Mammary epithelial cell (primary cell): ENCODE measurements at regions of chr15 and their contacts with region 1.

Region 1: DNA sequence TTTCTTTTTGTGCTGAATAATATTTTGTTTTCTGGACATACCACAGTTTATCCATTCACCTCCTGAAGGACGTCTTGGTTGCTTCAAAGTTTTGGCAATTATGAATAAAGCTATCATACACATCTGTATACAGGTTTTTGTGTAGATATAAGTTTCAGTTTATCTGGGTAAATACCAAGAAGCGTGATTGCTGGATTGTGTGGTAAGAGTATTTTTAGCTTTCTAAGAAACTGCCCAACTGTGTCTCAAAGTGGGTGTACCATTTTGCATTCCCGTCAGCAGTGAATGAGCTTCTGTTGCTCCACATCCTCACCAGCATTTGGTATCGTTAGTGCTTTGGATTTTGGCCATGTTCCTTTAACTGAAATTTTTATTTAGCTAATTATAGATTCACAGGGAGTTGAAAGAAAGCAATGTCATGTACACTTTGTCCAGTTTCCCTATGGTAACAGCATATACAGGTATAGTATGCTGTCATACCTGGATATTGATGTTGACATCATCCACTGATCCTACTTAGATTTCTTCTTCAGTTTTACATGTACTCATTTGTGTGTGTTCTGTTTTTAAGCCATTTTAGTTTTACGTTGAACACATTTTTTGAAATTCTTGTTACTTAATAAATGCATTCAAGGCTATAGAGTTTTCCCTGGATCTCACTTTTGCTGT is 11.9 kb downstream of the ARID3B start:
- DNase-seq: no peak
- H3K4me3 ChIP-seq: no peak overlapping the region
- H3K27ac ChIP-seq: no peak overlapping the region
- H3K4me1 ChIP-seq: no peaks in the 10 kb centered on the region
- H3K27me3 ChIP-seq: no peaks in the 10 kb centered on the region
- CTCF ChIP-seq: no peak

Region 2: GRCh38 chr15:74604983-74605794 is 52.3 kb after region 1 on chr15:
- CTCF ChIA-PET with region 1: no interaction called
- dilution Hi-C with region 1: loop called (anchors 5 kb)
- in situ Hi-C with region 1: no loop called
- intact Hi-C with region 1: no loop called
- DNase-seq: no peak
- H3K4me3 ChIP-seq: no peak overlapping the region
- H3K27ac ChIP-seq: no peak overlapping the region
- H3K4me1 ChIP-seq: no peaks in the 10 kb centered on the region
- H3K27me3 ChIP-seq: no peaks in the 10 kb centered on the region
- CTCF ChIP-seq: no peak